Right cardiac atrium (tissue), 5 donors: ENCODE measurements at regions of chr12 and their contacts with region 1.

Region 1: DNA sequence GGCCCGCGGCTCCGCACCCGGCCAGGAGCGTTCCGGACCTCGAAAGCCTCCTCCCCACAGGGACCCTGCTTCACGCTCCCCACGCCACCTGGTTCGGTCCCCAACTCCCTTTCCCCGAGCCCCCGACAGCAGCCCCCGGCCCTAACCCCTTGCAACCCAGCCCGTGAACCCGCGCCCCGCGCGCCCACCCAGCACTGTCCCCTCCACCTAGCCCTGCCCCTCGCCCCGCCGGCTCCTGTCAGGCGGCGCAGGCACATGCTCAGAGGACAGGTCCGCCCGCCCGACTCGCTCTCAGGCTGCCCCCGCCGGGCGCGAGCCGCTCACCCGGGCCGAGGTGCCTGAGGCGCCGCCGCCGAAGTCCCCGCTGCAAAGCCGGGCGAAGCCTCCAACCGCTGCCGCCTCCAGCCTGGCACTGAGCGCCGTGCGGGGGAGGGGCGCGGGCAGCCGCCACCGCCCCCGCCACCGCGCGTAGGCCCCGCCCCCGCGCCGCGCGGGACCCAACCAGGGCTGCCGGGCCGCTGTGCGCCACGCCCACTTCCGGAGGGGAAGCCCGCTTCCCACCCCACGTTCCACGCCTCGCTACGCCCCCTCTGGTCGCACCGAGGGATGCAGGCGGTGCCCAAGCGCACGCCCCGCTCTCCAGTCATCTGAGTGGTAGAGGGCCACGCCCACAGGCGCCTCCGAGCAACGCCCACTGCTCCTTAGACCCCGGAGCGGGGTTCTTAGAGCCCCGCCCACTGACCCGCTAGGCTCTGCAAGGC is at the start of gene CORO1C:
- DNase-seq: peak; percentile 98 to 99 (median 99)
- ATAC-seq: peak; percentile 89 to 92
- H3K4me3 ChIP-seq: peak within 1 kb of the TSS; percentile 80
- H3K27ac ChIP-seq: peak within 1 kb of the TSS; percentile 93
- H3K4me1 ChIP-seq: peaks cover 3% of the 10 kb centered on the region
- H3K27me3 ChIP-seq: no peaks in the 10 kb centered on the region
- total RNA-seq, gene CORO1C: 85.1 to 122 (median 93.6) TPM

Region 2: DNA sequence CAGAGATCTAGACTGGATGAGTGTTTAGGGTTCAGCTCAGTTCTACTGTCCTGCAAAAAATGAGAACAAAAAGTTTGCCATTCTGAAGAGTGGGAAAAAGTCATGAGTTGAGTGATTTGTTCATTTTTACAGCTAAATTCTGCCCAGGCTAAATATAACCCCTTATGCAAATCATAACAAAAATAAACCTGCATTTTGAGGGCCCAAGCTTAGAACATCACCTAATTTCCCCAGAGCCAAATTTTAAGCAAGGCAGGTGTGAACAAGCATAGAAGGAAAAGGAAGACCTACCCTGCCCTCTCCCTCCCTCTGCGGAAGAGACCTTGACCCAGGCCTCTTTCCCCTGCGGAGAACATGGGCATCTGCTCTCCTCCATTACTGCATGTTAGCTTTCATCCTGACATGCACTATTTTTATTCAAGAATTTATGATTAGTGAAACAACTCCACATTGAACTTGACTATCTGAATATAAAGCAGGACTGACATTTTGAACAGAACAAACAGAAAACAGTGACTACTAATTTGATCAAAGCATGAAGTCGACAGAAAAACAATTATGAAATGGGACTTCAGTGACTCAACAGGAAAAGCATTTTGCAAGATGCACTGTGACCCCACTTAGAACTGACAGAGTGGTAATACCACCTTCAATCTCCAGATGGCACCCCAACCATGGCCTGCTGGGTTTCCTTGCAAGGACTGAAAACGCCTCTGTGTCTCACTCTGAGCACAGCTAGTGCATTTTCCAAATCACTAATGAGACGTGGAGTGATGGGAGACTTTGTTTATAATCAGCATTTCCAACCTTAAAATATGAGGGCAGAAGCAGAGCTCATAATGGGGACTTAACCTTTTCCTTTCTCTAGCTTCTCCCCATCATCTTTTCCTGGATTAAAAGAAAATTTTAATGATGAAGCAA is 66.7 kb before region 1 on chr12:
- intact Hi-C with region 1: loop called in 2 of 4 experiments (anchors 2 to 5 kb)
- DNase-seq: peak; percentile 75 to 88 (median 83)
- ATAC-seq: peak; percentile 95
- H3K4me3 ChIP-seq: no peak overlapping the region
- H3K27ac ChIP-seq: peak overlapping the region; percentile 93
- H3K4me1 ChIP-seq: peaks cover 6% of the 10 kb centered on the region
- H3K27me3 ChIP-seq: no peaks in the 10 kb centered on the region

Region 3: GRCh38 chr12:108678104-108678730 is 53.1 kb before region 1 on chr12:
- intact Hi-C with region 1: loop called in 2 of 4 experiments (anchors 10 kb)
- DNase-seq: no peak
- ATAC-seq: peak; percentile 58 to 60
- H3K4me3 ChIP-seq: no peak overlapping the region
- H3K27ac ChIP-seq: no peak overlapping the region
- H3K4me1 ChIP-seq: peaks cover 3% of the 10 kb centered on the region
- H3K27me3 ChIP-seq: no peaks in the 10 kb centered on the region

Region 4: DNA sequence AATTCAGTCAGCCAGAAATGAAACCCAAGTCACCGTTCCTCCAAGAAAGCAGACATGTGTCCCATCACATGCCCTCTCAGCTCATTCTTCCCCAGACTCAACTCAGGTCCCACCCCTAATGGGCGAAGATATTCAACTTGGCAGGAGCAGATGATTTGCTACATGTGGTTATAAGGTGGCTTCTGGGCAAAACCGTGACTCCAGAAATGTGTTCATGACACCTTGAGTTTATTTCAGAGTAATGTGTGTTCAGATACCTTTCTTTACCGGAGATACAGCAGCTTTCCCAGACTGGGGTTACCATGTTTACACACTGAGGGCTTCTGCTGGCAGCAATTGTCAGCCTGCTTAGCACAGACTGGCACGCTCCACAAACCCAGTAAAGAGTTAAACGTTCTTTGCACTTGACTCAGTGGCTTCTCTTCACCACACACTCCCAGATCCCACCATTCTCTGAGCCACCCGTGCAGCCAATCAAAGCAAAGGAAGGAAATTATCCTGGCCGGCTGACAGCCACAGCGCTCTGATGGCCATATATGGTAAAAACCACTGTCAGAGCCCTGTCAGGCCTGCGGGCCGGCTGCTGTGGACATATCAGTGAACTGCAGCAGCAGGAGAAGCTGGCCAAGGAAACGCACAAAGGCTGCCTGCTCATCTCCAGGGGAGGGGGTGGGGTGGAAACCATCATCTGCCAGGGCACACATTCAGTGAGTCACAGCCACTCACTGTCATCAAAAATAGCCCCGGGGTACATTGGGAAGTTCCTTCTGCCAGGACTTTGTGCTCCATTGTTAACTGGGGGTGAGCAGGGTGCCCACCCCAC is 39.9 kb before region 1 on chr12:
- intact Hi-C with region 1: loop called in 1 of 4 experiments (anchors 5 kb)
- DNase-seq: peak; percentile 96 to 98 (median 97)
- ATAC-seq: peak; percentile 96 to 97
- H3K4me3 ChIP-seq: no peak overlapping the region
- H3K27ac ChIP-seq: peak overlapping the region; percentile 96
- H3K4me1 ChIP-seq: peaks cover 23% of the 10 kb centered on the region
- H3K27me3 ChIP-seq: no peaks in the 10 kb centered on the region

Region 5: GRCh38 chr12:108788076-108788782 is 56.9 kb after region 1 on chr12:
- intact Hi-C with region 1: loop called in 1 of 4 experiments (anchors 5 kb)
- DNase-seq: peak; percentile 75 to 95 (median 91)
- ATAC-seq: peak; percentile 71 to 85
- H3K4me3 ChIP-seq: no peak overlapping the region
- H3K27ac ChIP-seq: peak overlapping the region; percentile 40
- H3K4me1 ChIP-seq: peaks cover 18% of the 10 kb centered on the region
- H3K27me3 ChIP-seq: no peaks in the 10 kb centered on the region